ENCODE measurements at regions of chr16 and their contacts with region 1.

Region 1: DNA sequence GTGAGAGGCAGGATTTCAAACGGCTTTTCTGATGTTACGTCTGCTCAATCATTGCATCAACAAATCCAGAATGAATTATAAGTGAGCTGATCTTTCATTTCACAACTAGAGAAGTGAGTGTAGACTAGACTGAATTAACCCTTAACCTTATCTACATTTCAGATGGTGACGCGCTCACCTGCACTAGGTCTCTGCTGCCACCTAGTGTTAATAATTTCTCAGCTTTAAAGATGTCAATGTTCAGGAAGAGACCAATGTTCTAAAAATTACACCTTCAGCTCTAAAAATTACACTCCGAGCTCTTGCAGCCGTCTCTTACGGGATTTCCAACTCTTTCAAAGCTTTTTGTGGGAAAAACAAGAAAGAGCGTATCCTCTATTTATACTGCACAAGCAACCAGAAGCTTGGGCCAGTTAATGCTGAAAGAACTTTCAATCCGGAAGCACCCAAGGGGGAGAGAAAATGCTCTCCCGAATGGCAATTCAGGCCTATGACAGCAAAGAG is 88.2 kb upstream of the FA2H start:
- DNase-seq: no peak
- H3K4me3 ChIP-seq: no peak overlapping the region
- H3K27ac ChIP-seq: no peak overlapping the region
- H3K27me3 ChIP-seq: peaks cover 2% of the 10 kb centered on the region
- CTCF ChIP-seq: peak; percentile 80

Region 2: GRCh38 chr16:74577882-74578366 is 284.9 kb before region 1 on chr16:
- CTCF ChIA-PET with region 1: no interaction called
- POLR2A ChIA-PET with region 1: no interaction called
- DNase-seq: peak; percentile 34
- H3K4me3 ChIP-seq: no peak overlapping the region
- H3K27ac ChIP-seq: peak overlapping the region; percentile 54
- H3K27me3 ChIP-seq: no peaks in the 10 kb centered on the region
- CTCF ChIP-seq: no peak

Region 3: GRCh38 chr16:74650966-74651567 is 211.7 kb before region 1 on chr16:
- CTCF ChIA-PET with region 1: interaction called, 11 read pairs
- POLR2A ChIA-PET with region 1: no interaction called
- DNase-seq: no peak
- H3K4me3 ChIP-seq: no peak overlapping the region
- H3K27ac ChIP-seq: no peak overlapping the region
- H3K27me3 ChIP-seq: no peaks in the 10 kb centered on the region
- CTCF ChIP-seq: peak; percentile 55

Region 4: DNA sequence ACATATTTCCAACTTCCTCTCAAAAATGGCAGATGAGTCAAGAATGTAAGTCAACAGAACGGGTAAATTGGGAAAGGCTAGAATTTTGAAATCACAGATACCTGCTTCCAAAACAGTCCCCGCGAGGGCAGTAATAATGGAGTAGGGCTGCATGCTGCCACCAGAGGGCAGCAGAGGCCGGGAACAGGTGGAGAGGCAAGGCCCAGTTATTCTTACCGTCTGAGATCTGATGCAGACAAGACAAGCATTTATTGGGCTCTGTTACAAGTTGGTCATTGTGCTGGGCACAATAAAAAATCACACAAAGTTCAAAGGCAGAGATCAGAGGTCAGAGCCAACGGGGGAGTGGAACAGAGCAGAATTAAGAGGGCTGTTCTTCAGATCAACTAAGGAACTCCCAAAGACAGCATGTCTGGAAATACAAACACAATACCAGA is 153.3 kb before region 1 on chr16:
- CTCF ChIA-PET with region 1: interaction called, 208 read pairs
- POLR2A ChIA-PET with region 1: interaction called, 7 read pairs
- DNase-seq: peak; percentile 38
- H3K4me3 ChIP-seq: no peak overlapping the region
- H3K27ac ChIP-seq: no peak overlapping the region
- H3K27me3 ChIP-seq: peaks cover 8% of the 10 kb centered on the region
- CTCF ChIP-seq: peak; percentile 99

Region 5: DNA sequence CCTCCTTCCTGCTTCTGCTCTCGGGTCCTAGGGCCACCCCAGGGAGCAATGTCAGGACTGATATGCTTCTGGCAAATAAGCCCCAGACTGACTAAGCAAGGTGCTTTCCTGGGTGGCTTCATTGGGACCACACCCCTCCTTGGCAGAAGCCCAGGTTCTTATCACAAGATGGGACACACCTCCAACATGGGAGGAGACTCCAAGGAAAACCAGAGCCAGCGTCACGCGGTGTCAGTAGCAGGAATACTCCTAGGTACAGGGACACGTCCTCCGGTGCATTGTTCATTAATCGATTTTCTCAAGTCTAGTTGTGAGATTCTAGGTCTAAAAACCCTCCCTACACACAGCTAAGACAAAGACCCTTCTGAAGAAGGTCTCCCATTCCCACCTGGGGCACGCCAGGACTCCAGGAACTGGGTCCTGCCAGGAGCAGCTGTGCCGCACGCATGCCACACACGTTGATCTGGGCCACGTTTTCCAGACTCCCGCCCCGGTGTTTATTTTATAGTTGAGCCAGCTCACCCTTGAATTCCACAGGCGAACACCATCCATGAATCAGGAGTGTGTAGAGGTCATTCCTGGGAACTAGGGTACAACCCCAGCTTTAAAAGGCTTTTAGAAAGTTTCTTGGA is 119.0 kb before region 1 on chr16:
- CTCF ChIA-PET with region 1: interaction called, 10 read pairs
- POLR2A ChIA-PET with region 1: no interaction called
- DNase-seq: peak; percentile 20
- H3K4me3 ChIP-seq: no peak overlapping the region
- H3K27ac ChIP-seq: no peak overlapping the region
- H3K27me3 ChIP-seq: no peaks in the 10 kb centered on the region
- CTCF ChIP-seq: no peak

Region 6: DNA sequence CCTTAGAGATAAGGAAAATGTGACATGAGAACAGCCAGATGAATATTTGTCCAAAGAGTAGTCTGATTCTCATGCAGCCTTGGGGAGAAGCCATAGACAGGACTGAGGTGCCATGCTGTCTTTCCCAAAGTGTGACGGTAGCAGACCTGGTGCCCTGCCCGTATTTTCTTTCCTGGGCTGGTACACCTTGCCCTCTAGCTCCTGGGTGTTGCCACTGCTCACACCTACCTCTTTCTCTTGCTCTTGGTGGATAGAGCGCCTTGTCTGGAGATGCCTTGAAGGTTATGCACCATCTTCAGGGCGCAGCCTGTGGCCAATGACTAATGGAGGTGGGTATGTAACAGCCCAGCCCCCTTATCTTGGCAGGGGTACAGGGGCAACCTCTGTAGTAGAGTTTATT is 41.9 kb before region 1 on chr16:
- CTCF ChIA-PET with region 1: interaction called, 21 read pairs
- POLR2A ChIA-PET with region 1: no interaction called
- DNase-seq: no peak
- H3K4me3 ChIP-seq: no peak overlapping the region
- H3K27ac ChIP-seq: no peak overlapping the region
- H3K27me3 ChIP-seq: peaks cover 10% of the 10 kb centered on the region
- CTCF ChIP-seq: no peak

Region 7: DNA sequence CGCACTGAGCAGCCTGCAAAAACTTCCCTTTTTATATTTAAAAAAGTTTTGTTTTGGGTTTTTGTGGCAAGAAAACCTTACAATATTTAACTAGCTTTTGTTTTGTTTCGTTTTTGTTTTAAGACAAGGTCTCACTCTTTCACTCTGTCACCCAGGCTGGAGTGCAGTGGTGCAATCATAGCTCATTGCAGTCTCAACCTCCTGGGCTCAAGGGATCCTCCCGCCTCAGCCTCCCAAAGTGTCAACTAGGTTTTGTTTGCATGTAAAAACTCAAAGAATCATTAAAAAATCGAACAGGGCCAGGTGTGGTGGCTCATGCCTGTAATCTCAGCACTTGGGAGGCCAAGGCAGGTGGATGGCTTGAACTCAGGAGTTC is 10.3 kb before region 1 on chr16:
- CTCF ChIA-PET with region 1: interaction called, 38 read pairs
- POLR2A ChIA-PET with region 1: no interaction called
- DNase-seq: no peak
- H3K4me3 ChIP-seq: no peak overlapping the region
- H3K27ac ChIP-seq: no peak overlapping the region
- H3K27me3 ChIP-seq: peaks cover 5% of the 10 kb centered on the region
- CTCF ChIP-seq: no peak

Region 8: DNA sequence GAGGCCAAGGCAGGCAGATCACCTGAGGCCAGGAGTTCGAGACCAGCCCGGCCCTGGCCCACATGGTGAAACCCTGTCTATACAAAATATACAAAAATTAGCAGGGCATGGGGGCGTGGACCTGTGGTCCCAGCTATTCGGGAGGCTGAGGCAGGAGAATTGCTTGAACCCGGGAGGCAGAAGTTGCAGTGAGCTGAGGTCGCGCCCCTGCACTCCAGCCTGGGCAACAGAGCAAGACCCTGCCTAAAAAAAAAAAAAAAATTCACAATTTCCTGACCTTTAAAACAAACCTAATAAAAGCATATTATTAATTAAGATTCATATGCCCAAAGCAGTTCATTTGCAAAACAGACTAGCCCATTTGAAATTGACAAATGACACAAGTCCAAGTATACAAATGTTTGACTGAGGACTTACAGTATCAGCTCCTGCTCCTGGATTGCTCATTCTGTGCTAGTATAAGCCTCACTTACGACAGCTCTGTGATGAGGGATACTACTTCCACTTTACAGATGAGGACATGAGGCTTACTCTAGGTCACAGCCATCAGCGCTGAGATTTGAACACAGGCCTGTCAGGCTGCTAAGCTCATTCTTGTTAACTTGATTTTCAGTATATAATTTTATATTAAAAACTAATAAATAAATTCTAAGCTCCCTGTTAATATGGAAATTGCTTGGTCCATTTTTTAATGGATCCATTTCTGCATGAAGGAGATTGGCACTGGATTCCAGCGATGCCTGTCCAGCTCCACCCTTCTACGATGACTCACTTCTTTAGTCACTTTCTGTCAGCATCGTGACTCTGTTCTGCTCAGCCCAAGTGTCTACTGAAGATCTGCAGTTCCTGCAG is 33.8 kb after region 1 on chr16:
- CTCF ChIA-PET with region 1: interaction called, 11 read pairs
- POLR2A ChIA-PET with region 1: no interaction called
- DNase-seq: no peak
- H3K4me3 ChIP-seq: no peak overlapping the region
- H3K27ac ChIP-seq: no peak overlapping the region
- H3K27me3 ChIP-seq: no peaks in the 10 kb centered on the region
- CTCF ChIP-seq: no peak

Region 9: GRCh38 chr16:75238132-75238852 is 375.5 kb after region 1 on chr16:
- CTCF ChIA-PET with region 1: no interaction called
- POLR2A ChIA-PET with region 1: no interaction called
- DNase-seq: peak; percentile 74
- H3K4me3 ChIP-seq: 0 out of 2 replicates have a peak overlapping the region, but pooled peaks have one; percentile 2
- H3K27ac ChIP-seq: peak overlapping the region; percentile 98
- H3K27me3 ChIP-seq: no peaks in the 10 kb centered on the region
- CTCF ChIP-seq: no peak

Measured in AG04450 (cell line).